ENCODE measurements at regions of chr3 and their contacts with region 1.

Region 1: DNA sequence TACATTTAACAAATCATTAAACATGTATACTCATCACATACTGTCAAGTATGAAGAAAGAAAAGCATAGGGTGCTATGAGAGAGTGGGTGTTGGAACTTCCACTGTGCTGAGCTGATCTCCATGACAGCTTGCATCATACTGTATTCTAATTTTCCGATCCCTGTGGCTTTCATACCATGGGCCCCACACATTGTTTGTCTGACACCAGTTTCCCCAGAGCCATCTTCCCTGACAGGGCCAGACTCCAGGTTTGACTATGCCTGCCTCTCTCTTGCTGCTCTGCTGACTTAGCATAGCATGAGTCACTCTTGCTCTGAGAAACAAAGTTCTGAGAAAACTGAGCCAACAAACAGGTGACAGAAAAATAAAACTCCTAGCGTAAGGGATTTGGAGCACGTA is 37.0 kb upstream of the CASR start:
- DNase-seq: peak; percentile 62
- H3K4me3 Mint-ChIP-seq: peak overlapping the region; percentile 0
- H3K27ac Mint-ChIP-seq: peak overlapping the region; percentile 69
- H3K4me1 Mint-ChIP-seq: peaks cover 23% of the 10 kb centered on the region
- H3K27me3 Mint-ChIP-seq: peaks cover 2% of the 10 kb centered on the region

Region 2: DNA sequence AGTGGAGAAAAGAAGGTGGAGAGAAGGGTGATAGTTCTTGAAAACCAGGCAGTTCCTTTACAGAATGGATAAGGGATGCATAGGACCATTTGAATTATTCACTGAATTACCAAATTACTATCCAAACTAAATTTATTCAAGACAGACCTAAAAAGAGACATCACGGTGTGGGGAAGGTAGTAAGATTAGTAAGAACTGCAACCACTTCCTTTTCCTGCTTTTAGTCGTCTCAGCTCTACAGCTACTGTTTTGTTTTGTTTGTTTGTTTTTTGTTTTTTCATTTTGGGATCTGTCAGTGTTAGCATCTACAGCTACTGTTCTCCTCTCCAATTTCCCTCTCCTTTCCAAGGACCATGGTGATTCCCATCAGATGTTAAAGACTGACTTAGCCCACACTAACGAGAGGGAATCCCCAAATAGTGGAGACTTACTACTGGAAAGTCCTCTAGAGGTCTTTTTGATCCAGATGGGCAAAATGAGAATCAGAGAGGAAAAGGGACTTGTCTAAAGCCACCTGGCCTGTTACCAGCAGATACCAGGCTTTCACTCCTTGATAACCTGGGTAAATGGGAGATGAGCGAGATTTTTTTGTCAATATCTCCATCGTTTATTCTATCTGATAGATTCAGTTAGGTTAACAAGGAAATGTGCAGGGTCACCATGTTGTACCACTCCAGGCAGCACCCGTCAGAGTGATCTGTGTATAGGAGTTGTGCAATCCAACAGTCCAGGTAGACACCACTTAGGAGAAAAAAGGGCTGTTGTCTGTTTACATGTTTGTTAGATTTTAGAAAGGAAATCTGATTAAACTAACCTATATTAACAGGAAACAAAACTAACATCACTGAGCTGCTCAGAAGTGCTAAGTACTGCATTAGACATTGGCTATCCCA is 491.7 kb before region 1 on chr3:
- intact Hi-C with region 1: loop called (anchors 5 kb)
- DNase-seq: peak; percentile 9
- H3K4me3 Mint-ChIP-seq: peak overlapping the region; percentile 50
- H3K27ac Mint-ChIP-seq: peak overlapping the region; percentile 79
- H3K4me1 Mint-ChIP-seq: peaks cover 87% of the 10 kb centered on the region
- H3K27me3 Mint-ChIP-seq: no peaks in the 10 kb centered on the region

Region 3: DNA sequence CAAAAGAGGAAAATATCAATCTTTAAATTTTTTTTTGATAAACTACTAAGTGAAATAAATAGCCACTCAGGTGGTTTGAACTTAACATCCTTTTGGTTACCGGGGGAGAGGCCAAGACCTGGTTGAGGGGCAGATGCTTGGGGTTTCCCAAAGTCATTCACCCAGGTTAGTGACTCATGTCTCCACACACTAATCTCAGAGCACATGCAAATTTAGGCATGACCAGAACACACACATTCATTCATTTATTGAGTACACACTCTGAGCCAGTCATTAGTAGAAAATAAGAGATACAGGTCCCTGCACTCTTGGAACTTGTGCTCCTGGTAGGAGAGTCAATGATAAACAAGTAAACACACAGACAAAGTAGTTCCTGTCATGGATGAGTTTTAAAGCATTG is 131.7 kb before region 1 on chr3:
- intact Hi-C with region 1: loop called (anchors 2 kb)
- DNase-seq: no peak
- H3K4me3 Mint-ChIP-seq: no peak overlapping the region
- H3K27ac Mint-ChIP-seq: peak overlapping the region; percentile 21
- H3K4me1 Mint-ChIP-seq: peaks cover 40% of the 10 kb centered on the region
- H3K27me3 Mint-ChIP-seq: peaks cover 12% of the 10 kb centered on the region

Region 4: GRCh38 chr3:122183521-122183892 is 37.0 kb after region 1 on chr3 and contains the start of gene CASR:
- intact Hi-C with region 1: loop called (anchors 5 kb)
- DNase-seq: no peak
- H3K4me3 Mint-ChIP-seq: peak within 1 kb of the TSS; percentile 52
- H3K27ac Mint-ChIP-seq: no peak within 1 kb of the TSS
- H3K4me1 Mint-ChIP-seq: peaks cover 8% of the 10 kb centered on the region
- H3K27me3 Mint-ChIP-seq: peaks cover 63% of the 10 kb centered on the region
- total RNA-seq, gene CASR: not detected in 2 replicates

Region 5: DNA sequence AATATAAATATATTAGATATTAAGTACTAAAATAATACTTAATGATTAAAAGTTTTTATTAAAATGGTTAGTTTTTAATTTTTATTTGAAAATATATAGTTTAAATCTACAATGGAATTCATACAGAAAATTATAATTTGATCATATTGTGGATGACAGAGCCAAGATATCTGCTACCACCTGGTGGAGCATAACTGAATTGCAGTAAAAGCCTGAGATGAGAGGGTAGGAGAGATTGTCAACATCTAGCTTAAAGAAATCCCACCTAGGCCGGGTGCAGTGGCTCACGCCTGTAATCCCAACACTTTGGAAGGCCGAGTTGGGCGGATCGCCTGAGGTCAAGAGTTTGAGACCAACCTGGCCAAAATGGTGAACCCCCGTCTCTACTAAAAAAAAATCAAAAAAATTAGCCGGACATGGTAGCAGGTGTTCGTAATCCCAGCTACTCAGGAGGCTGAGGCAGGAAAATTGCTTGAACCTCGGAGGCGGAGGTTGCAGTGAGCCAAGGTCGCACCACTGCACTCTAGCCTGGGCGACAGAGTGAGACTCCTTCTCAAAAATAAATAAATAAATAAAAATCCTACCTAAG is 153.5 kb after region 1 on chr3:
- intact Hi-C with region 1: loop called (anchors 1 kb)
- DNase-seq: no peak
- H3K4me3 Mint-ChIP-seq: no peak overlapping the region
- H3K27ac Mint-ChIP-seq: no peak overlapping the region
- H3K4me1 Mint-ChIP-seq: peaks cover 28% of the 10 kb centered on the region
- H3K27me3 Mint-ChIP-seq: no peaks in the 10 kb centered on the region

Region 6: DNA sequence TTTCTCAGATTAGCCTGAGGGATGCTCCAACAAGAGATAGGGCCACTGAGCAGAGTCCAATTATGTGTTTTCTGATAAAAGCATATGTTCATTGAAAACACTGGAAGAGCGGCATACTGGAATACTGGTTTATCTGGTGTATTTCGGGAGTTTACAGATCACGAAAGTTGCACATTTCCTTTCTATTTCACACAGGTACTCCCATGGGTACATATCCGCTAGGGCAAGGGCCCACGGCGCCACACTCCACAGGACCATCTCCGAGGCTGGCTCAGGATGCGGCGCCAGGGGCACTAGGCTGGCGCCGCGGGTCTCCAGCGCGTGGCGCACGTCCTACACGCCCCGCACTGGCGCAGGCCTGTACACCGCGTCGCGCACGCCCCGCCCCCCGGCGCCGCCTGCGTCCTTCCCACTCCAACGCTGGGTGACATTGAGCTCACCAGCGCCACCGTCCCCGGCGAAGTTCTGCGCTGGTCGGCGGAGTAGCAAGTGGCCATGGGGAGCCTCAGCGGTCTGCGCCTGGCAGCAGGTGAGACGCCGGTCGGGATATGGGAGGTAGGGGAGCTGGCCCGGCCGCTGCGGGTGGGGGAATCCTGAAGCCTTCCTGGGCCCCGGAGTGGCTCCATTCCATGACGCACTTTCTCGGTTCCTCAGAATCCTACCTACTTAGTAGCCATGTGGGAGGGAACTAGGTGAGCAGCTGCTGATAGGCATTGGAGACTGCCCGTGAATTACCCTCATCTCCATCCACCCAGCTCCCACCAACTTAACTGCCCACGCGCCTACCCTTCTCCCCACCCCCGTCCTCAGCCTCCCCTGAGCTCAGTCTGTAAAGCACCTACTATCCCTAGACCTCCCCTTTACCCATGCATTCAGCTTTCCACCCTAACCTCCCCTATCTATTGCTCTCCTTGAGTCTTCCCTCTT is 237.6 kb after region 1 on chr3 and contains the start of gene FAM162A:
- intact Hi-C with region 1: loop called (anchors 1 kb)
- DNase-seq: peak; percentile 93
- H3K4me3 Mint-ChIP-seq: peak within 1 kb of the TSS; percentile 96
- H3K27ac Mint-ChIP-seq: peak within 1 kb of the TSS; percentile 90
- H3K4me1 Mint-ChIP-seq: peaks cover 81% of the 10 kb centered on the region
- H3K27me3 Mint-ChIP-seq: no peaks in the 10 kb centered on the region
- total RNA-seq, gene FAM162A: 63.7 and 70.0 TPM in 2 replicates

Measured in activated T-helper 1 cell treated with anti-CD3 and anti-CD28 coated beads, Interleukin-12 subunit alpha, Interleukin-12 subunit beta, Interleukin-2, Interleukin-4 antibody, amounts not matched to agents 30 ng/mL and 10 ng/mL and 1 ng/mL, durations not matched to agents 14 hours and 24 hours and 36 hours (primary cell).